ENCODE measurements at regions of chr12 and their contacts with region 1.

Region 1: DNA sequence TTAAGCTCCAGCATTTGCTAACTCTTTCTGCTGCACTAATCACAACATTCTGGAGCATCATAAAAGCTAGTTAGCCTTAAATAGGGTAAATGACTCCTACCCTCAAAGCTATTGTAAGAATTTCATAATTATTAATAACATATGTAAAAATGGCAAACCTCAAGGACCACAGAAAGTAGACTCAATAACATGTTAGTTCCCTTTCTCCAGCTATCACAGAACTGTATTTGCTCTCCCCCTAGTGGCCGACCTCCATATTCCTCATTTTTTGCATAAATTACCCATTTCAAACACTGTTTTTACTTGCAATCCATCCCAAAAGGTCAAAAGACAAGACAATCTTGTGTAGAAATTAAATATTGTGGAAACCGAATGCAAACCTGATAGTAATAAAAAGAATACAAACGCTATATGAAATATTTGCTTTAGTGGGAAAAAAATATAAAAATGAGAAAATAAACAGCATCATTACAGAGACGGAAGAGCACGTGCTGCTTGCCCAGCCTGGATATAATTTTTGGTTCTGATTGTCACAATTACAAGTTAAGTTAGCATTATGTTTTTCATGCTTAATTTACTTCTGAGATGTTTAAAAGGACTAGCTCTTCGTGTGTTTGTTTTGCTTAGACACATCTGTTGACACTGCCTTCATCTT is 97.9 kb downstream of the RERGL start:
- DNase-seq: no peak
- H3K4me3 ChIP-seq: no peak overlapping the region
- H3K27ac ChIP-seq: no peak overlapping the region
- H3K4me1 ChIP-seq: no peaks in the 10 kb centered on the region
- H3K27me3 ChIP-seq: no peaks in the 10 kb centered on the region
- CTCF ChIP-seq: peak in 2 of 3 experiments; percentile 30 to 77; a peak in 2 of 4 replicates
- EP300 ChIP-seq: no peak
- POLR2A ChIP-seq: no peak
- RAD21 ChIP-seq: peak; percentile 66 to 67

Region 2: GRCh38 chr12:17793854-17794253 is 198.3 kb before region 1 on chr12:
- CTCF ChIA-PET with region 1: no interaction called
- POLR2A ChIA-PET with region 1: no interaction called
- DNase-seq: no peak
- H3K4me3 ChIP-seq: no peak overlapping the region
- H3K27ac ChIP-seq: no peak overlapping the region
- H3K4me1 ChIP-seq: no peaks in the 10 kb centered on the region
- H3K27me3 ChIP-seq: no peaks in the 10 kb centered on the region
- CTCF ChIP-seq: no peak
- EP300 ChIP-seq: no peak
- POLR2A ChIP-seq: no peak
- RAD21 ChIP-seq: no peak

Region 3: DNA sequence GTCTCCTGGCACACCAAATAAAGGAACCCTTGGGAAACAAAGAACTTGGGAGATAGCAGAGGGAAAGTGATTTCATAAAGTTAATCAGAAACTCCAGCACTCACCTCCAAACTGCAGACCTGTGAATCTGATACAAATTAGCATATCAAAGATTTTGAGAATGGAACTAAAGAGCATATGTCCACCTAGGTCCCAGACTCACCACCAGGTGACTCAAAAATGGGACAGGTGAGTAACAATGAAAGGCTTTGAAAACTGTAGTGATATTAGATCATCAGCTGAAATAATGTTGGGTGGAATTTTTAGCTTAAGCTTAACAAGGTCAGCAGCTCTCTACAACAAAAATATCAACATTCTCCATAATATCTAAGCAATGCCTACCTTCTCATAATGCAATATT is 116.9 kb before region 1 on chr12:
- CTCF ChIA-PET with region 1: no interaction called
- POLR2A ChIA-PET with region 1: no interaction called
- DNase-seq: no peak
- H3K4me3 ChIP-seq: no peak overlapping the region
- H3K27ac ChIP-seq: no peak overlapping the region
- H3K4me1 ChIP-seq: no peaks in the 10 kb centered on the region
- H3K27me3 ChIP-seq: no peaks in the 10 kb centered on the region
- CTCF ChIP-seq: no peak
- EP300 ChIP-seq: no peak
- POLR2A ChIP-seq: no peak
- RAD21 ChIP-seq: no peak

Region 4: GRCh38 chr12:17954788-17955187 is 37.3 kb before region 1 on chr12:
- CTCF ChIA-PET with region 1: interaction called, 10 read pairs
- POLR2A ChIA-PET with region 1: no interaction called
- DNase-seq: no peak
- H3K4me3 ChIP-seq: no peak overlapping the region
- H3K27ac ChIP-seq: no peak overlapping the region
- H3K4me1 ChIP-seq: peaks cover 0 to 2% (median 0%) of the 10 kb centered on the region in 4 experiments; a peak in 1 of 7 replicates
- H3K27me3 ChIP-seq: no peaks in the 10 kb centered on the region
- CTCF ChIP-seq: no peak
- EP300 ChIP-seq: no peak
- POLR2A ChIP-seq: no peak
- RAD21 ChIP-seq: 0 out of 4 replicates have a peak, but pooled peaks of 1 of the 2 experiments have one; percentile 7

Region 5: DNA sequence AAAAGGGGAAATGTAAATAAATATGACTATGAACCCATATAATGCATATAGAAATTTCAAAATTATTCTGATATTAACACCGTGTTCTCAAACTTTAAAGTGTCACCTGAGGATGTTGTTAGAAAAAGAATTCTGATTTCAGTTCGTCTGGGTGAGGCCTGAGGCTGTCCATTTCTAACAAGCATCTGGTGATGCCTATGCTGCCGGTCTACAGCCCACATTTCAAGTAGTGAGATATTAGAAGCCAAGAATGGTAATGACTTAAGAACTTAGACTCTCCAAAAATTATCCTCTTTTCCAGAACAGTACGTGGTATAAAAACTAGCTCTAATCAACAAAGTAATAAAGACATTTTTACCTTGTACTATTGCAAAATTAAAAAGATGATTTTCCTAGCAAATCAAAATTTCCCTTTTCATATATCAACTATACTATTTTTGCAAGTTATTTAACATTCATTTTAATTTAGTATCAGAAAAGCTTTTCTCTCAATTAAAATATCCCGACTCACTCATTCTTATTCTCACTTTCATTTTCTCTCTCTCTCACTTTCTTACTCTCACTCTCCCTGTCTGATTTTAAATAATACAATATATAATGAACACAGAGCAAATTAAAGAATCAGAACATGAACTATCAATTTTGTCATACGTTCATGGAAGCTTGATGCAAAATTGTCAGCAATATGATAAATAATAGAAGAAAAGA is 304.2 kb after region 1 on chr12:
- CTCF ChIA-PET with region 1: no interaction called
- POLR2A ChIA-PET with region 1: no interaction called
- DNase-seq: no peak
- H3K4me3 ChIP-seq: no peak overlapping the region
- H3K27ac ChIP-seq: no peak overlapping the region
- H3K4me1 ChIP-seq: peaks cover 0 to 6% (median 0%) of the 10 kb centered on the region in 4 experiments; a peak in 2 of 7 replicates
- H3K27me3 ChIP-seq: no peaks in the 10 kb centered on the region
- CTCF ChIP-seq: no peak
- EP300 ChIP-seq: no peak
- POLR2A ChIP-seq: no peak
- RAD21 ChIP-seq: no peak

Measured in H1 (cell line).